ENCODE measurements at regions of chr19 and their contacts with region 1.

Region 1: DNA sequence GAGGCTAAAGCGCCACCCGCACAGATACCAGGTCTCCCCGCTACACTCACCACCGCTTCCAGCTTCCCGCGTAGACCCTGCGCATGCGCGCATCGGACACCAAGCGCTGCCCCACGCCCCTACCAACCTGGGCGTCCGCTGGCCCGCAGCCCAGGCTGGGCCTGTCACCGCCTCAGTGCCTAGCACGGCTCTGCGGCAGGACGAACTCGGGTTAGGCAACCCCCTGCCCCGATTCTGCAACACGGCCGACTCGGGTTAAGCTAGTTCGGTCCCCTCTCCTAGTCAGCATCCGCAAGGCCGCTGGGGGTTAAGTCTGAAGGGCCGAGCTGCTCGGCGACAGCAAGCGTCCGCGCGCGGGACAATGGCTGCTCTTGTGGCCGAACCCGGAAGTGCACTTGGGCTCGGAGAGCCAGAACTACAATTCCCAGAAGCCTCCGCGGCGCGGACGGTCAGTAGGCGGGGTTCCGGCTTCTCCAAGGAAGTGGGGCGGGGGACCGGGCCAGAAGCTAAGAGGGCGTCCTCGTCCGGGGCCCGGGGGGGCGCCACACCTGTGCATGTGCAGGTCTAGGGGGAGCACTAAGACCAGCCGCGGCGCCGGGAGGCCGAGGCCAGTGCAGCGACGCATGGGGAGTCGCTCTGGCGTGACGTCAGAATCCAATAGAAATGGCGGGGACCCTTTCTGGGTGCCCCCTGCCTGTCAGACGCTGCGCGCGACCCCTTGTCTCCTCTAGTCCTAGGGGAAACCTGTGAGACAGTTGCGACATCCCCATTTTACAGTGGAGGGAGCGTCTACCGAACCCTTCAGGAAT is at the start of gene ZNF180:
- DNase-seq: peak; percentile 89 to 97 (median 96)
- H3K4me3 ChIP-seq: peak within 1 kb of the TSS; percentile 69 to 100 (median 94)
- H3K27ac ChIP-seq: peak within 1 kb of the TSS; percentile 82 to 98 (median 94)
- H3K27me3 ChIP-seq: peaks cover 0 to 11% (median 0%) of the 10 kb centered on the region in 45 donors
- CTCF ChIP-seq: peak; percentile 13 to 71 (median 56)
- total RNA-seq, gene ZNF180: 5.0 to 16.3 (median 7.9) TPM

Region 2: GRCh38 chr19:43826787-43827754 is 673.3 kb before region 1 on chr19 and contains the start of gene ZNF283:
- intact Hi-C with region 1: loop called in 1 of 2 experiments (anchors 5 kb)
- DNase-seq: peak; percentile 78 to 95 (median 94)
- H3K4me3 ChIP-seq: peak within 1 kb of the TSS; percentile 50 to 86 (median 76)
- H3K27ac ChIP-seq: peak within 1 kb of the TSS in 36 of 59 donors; percentile 3 to 78 (median 48)
- H3K27me3 ChIP-seq: no peaks in the 10 kb centered on the region
- CTCF ChIP-seq: peak in 22 of 56 donors; percentile 11 to 43 (median 24)
- total RNA-seq, gene ZNF283: 17.2 to 43.0 (median 24.6) TPM

Region 3: DNA sequence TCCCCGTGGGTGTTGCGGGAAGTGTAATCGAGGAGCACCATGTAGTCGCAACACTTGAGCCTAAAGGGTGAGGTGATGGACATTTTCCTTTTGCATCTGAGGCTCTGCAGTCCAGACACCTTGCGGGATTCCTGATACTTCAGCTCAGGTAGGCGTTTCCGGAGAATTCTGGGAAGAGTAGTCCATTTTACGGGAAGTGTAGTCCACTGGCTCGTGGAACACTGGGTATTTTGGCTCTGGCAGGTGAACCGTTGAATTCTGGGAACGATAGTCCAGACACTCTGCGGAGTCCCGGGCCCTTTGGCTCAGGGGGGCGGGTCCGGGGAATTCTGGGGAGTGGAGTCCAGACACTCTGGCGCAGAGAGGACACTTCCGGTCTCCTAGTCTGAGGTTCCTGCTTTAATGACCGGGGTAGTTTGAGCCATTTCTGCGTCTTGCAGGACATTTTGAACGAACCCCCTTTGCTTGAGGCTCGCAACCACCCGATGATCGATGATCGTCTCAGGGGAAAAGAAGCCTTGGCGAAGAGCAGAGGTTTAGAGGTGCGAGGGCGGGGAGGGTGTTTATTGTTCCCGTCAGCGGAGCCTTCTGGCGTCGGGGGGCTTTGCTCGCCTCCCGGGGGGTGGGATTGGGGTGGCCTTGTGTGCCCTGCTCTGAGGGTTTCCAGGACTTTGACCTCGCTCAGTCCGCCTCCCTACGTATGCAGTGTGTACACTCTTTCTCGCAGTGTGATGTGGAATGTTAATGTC is 448.5 kb before region 1 on chr19 and contains the start of gene ZNF223:
- intact Hi-C with region 1: loop called in 1 of 2 experiments (anchors 5 kb)
- DNase-seq: peak; percentile 90 to 98 (median 96)
- H3K4me3 ChIP-seq: peak within 1 kb of the TSS; percentile 59 to 95 (median 83)
- H3K27ac ChIP-seq: peak within 1 kb of the TSS in 51 of 59 donors; percentile 7 to 88 (median 71)
- H3K27me3 ChIP-seq: peaks cover 0 to 17% (median 0%) of the 10 kb centered on the region in 45 donors
- CTCF ChIP-seq: peak in 21 of 56 donors; percentile 7 to 45 (median 28)
- total RNA-seq, gene ZNF223: 5.2 to 18.6 (median 10.3) TPM

Region 4: DNA sequence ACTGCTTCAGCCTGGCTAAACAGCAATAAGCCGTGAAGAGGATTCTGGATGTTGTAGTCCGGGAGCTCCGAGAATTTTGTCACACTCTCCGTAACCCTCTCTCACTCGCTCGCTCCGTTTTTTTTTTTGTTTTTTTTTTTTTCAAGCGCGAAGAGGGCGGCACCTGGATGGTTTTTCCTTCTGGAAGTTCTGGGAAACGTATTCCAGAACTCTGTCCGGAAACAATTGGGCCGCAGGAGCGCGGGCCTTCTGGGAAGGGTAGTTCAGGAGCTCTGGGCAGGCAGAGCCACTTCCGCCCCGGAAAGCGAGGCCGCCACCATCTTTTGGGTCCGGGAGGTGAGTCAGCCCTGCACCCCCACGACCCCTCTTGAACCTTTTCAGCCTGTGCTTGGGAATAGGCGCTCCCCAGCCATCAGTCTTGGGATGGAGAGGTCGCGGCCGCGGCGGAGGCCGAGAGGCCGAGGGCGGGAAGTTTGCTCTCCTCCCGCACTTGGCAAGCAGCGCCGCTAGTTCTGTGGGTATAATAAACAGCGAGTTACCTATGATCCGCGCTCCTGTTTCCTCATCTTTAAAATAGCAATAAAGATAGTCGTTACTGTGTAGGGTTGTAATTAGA is 288.0 kb before region 1 on chr19 and contains the start of gene ZNF227:
- intact Hi-C with region 1: loop called in 1 of 2 experiments (anchors 2 kb)
- DNase-seq: peak; percentile 78 to 94 (median 92)
- H3K4me3 ChIP-seq: peak within 1 kb of the TSS; percentile 68 to 100 (median 90)
- H3K27ac ChIP-seq: peak within 1 kb of the TSS; percentile 11 to 96 (median 87)
- H3K27me3 ChIP-seq: no peaks in the 10 kb centered on the region
- CTCF ChIP-seq: peak in 15 of 56 donors; percentile 6 to 41 (median 21)
- total RNA-seq, gene ZNF227: 23.1 to 58.1 (median 37.4) TPM

Region 5: DNA sequence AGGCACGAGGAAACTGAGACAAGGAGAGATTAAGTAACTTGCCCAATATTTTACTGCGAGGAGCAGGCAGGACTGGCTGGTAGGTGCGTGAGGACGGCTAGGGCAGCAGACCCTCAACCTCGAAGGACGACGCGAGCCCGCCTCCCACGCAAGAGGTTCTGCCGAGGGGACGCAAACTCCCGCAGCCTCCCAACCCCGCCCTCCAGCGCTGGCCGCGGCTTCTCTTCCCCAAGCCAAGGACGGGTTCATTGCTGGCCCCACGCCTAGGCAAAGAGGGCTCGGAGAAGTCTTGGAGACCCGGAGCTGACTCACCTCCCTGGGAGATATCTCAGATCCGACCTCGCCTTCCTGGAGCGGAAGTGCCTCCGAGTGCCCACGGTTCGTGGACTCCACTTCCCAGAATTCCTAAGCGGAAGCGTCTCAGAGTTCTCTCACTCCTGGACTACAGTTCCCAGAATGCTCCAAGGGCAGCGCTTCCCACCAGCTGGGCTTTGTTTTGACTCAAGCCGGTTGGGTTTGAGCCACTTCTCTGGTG is 195.6 kb before region 1 on chr19 and contains the start of gene ZNF235:
- intact Hi-C with region 1: loop called in 1 of 2 experiments (anchors 2 kb)
- DNase-seq: peak; percentile 77 to 95 (median 92)
- H3K4me3 ChIP-seq: peak within 1 kb of the TSS; percentile 63 to 99 (median 89)
- H3K27ac ChIP-seq: peak within 1 kb of the TSS in 48 of 59 donors; percentile 2 to 89 (median 60)
- H3K27me3 ChIP-seq: no peaks in the 10 kb centered on the region
- CTCF ChIP-seq: peak in 17 of 56 donors; percentile 10 to 43 (median 25)
- total RNA-seq, gene ZNF235: 8.6 to 20.5 (median 14.1) TPM

Region 6: GRCh38 chr19:44356383-44357111 is 143.8 kb before region 1 on chr19 and contains the start of gene ZNF112:
- intact Hi-C with region 1: no loop called
- DNase-seq: peak; percentile 82 to 95 (median 92)
- H3K4me3 ChIP-seq: peak within 1 kb of the TSS; percentile 57 to 87 (median 75)
- H3K27ac ChIP-seq: peak within 1 kb of the TSS in 50 of 59 donors; percentile 14 to 86 (median 70)
- H3K27me3 ChIP-seq: peaks cover 0 to 4% (median 0%) of the 10 kb centered on the region in 45 donors
- CTCF ChIP-seq: peak in 26 of 56 donors; percentile 4 to 43 (median 20)
- total RNA-seq, gene ZNF112: 8.1 to 22.7 (median 12.7) TPM

Region 7: GRCh38 chr19:44401139-44402115 is 98.9 kb before region 1 on chr19 and contains the start of gene ZNF285:
- intact Hi-C with region 1: loop called in 1 of 2 experiments (anchors 1 kb)
- DNase-seq: peak; percentile 83 to 94 (median 90)
- H3K4me3 ChIP-seq: peak within 1 kb of the TSS; percentile 51 to 87 (median 71)
- H3K27ac ChIP-seq: peak within 1 kb of the TSS in 19 of 59 donors; percentile 0 to 62 (median 44)
- H3K27me3 ChIP-seq: no peaks in the 10 kb centered on the region
- CTCF ChIP-seq: peak in 19 of 56 donors; percentile 6 to 49 (median 24)
- total RNA-seq, gene ZNF285: 6.4 to 17.3 (median 11.3) TPM

Measured in dorsolateral prefrontal cortex (tissue), 120 donors.